GM12878 (cell line): ENCODE measurements at regions of chr3 and their contacts with region 1.

Region 1: GRCh38 chr3:179147873-179148615 is at the start of gene PIK3CA:
- DNase-seq: peak; percentile 96
- ATAC-seq: peak; percentile 83
- H3K4me3 ChIP-seq: peak within 1 kb of the TSS; percentile 82
- H3K27ac ChIP-seq: peak within 1 kb of the TSS; percentile 88
- H3K4me1 ChIP-seq: peaks cover 5% of the 10 kb centered on the region; the same call in 1 of the 2 replicates
- H3K27me3 ChIP-seq: no peaks in the 10 kb centered on the region
- CTCF ChIP-seq: no peak
- EP300 ChIP-seq: peak in 1 of 2 experiments; percentile 2; a peak in 1 of 4 replicates
- POLR2A ChIP-seq: peak; percentile 76
- RAD21 ChIP-seq: no peak
- polyA plus RNA-seq, gene PIK3CA: 3.0 to 4.1 TPM

Region 2: GRCh38 chr3:179108086-179108485 is 40.0 kb before region 1 on chr3:
- CTCF ChIA-PET with region 1: interaction called, 4 read pairs
- POLR2A ChIA-PET with region 1: no interaction called
- RAD21 ChIA-PET with region 1: interaction called, 4 read pairs
- SMC1A ChIA-PET with region 1: interaction called, 4 read pairs
- in situ Hi-C with region 1: no loop called
- intact Hi-C with region 1: loop called (anchors 5 kb)
- DNase-seq: no peak
- ATAC-seq: no peak
- H3K4me3 ChIP-seq: no peak overlapping the region
- H3K27ac ChIP-seq: no peak overlapping the region
- H3K4me1 ChIP-seq: peaks cover 3% of the 10 kb centered on the region; the same call in 1 of the 2 replicates
- H3K27me3 ChIP-seq: no peaks in the 10 kb centered on the region
- CTCF ChIP-seq: no peak
- EP300 ChIP-seq: no peak
- POLR2A ChIP-seq: no peak
- RAD21 ChIP-seq: no peak

Region 3: DNA sequence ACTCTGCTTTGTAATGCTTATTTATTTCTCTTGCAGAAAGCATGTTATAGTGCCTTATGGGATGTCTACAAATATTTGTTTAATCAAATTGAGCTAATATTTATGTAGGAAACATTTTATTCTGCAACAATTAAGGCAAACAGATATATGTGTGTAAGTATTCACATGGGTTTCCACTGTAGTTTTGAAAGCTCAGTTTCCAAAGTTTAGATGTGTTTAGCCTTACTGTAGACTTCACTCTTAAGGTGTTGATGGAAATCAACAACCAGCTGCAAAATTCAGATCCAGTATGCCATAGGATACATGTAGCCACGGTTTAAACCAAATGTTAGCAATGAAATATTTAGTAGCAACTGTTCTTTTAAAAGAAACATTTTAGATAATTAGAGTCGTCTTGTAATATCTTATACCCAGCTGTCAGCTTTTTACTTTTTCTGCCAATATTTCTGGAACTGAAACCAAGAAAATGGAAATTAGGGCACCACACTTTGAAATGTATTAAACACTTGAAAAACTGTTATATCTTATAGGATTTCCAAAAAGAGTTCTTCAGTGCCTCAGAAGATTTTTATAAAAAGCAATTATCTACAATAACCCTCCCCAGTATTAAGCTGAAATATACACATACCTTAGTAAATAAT is 18.6 kb after region 1 on chr3:
- CTCF ChIA-PET with region 1: interaction called, 7 read pairs
- POLR2A ChIA-PET with region 1: interaction called, 3 read pairs
- RAD21 ChIA-PET with region 1: interaction called, 12 read pairs
- SMC1A ChIA-PET with region 1: interaction called, 5 read pairs
- in situ Hi-C with region 1: no loop called
- intact Hi-C with region 1: no loop called
- DNase-seq: no peak
- ATAC-seq: peak; percentile 43
- H3K4me3 ChIP-seq: no peak overlapping the region
- H3K27ac ChIP-seq: no peak overlapping the region
- H3K4me1 ChIP-seq: peaks cover 3% of the 10 kb centered on the region; the same call in 1 of the 2 replicates
- H3K27me3 ChIP-seq: no peaks in the 10 kb centered on the region
- CTCF ChIP-seq: no peak
- EP300 ChIP-seq: no peak
- POLR2A ChIP-seq: no peak
- RAD21 ChIP-seq: no peak

Region 4: GRCh38 chr3:179236669-179237301 is 88.7 kb after region 1 on chr3:
- CTCF ChIA-PET with region 1: interaction called, 3 read pairs
- POLR2A ChIA-PET with region 1: no interaction called
- RAD21 ChIA-PET with region 1: interaction called, 6 read pairs
- SMC1A ChIA-PET with region 1: no interaction called
- in situ Hi-C with region 1: no loop called
- intact Hi-C with region 1: loop called (anchors 2 kb)
- DNase-seq: no peak
- ATAC-seq: peak; percentile 92
- H3K4me3 ChIP-seq: no peak overlapping the region
- H3K27ac ChIP-seq: peak overlapping the region; percentile 42; the same call in 1 of the 2 replicates
- H3K4me1 ChIP-seq: peaks cover 2% of the 10 kb centered on the region; the same call in 1 of the 2 replicates
- H3K27me3 ChIP-seq: no peaks in the 10 kb centered on the region
- CTCF ChIP-seq: no peak
- EP300 ChIP-seq: no peak
- POLR2A ChIP-seq: no peak
- RAD21 ChIP-seq: no peak

Region 5: GRCh38 chr3:179401561-179401960 is 253.5 kb after region 1 on chr3:
- CTCF ChIA-PET with region 1: no interaction called
- POLR2A ChIA-PET with region 1: no interaction called
- RAD21 ChIA-PET with region 1: no interaction called
- SMC1A ChIA-PET with region 1: no interaction called
- in situ Hi-C with region 1: no loop called
- intact Hi-C with region 1: no loop called
- DNase-seq: no peak
- ATAC-seq: no peak
- H3K4me3 ChIP-seq: no peak overlapping the region
- H3K27ac ChIP-seq: no peak overlapping the region
- H3K4me1 ChIP-seq: no peaks in the 10 kb centered on the region
- H3K27me3 ChIP-seq: no peaks in the 10 kb centered on the region
- CTCF ChIP-seq: no peak
- EP300 ChIP-seq: no peak
- POLR2A ChIP-seq: no peak
- RAD21 ChIP-seq: no peak